Stomach (tissue), 19 donors: ENCODE measurements at regions of chr2 and their contacts with region 1.

Region 1: DNA sequence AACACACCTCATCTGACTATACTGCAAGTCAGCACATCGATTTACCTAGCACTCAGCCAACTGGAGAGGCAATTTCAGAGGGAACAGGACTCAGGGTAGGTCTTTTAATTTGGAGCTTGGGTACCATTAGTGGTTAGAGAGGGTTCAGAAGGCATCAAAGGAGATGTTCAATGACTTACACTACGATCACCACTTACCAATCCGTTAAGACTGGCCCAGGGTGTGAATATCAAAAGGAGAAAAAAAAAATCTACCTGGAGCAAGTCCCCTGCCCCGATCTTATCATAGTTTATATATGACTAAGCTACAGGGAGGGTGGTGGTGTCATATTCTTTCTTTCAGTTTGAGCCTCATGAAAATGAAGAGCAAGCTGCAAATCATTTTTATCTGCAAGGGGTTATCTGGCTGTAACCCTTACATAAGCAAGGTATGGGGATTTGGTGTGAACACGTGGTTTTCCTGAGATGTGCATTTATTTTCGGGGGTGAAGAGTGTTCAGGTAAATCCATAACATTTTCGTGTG is 36.4 kb upstream of the GPD2 start:
- DNase-seq: no peak
- H3K4me3 ChIP-seq: peak overlapping the region; percentile 66 to 79 (median 72)
- H3K27ac ChIP-seq: peak overlapping the region; percentile 88 to 97 (median 92)
- H3K4me1 ChIP-seq: peaks cover 14 to 27% (median 16%) of the 10 kb centered on the region in 4 donors
- H3K27me3 ChIP-seq: no peaks in the 10 kb centered on the region
- CTCF ChIP-seq: no peak
- EP300 ChIP-seq: no peak
- POLR2A ChIP-seq: no peak

Region 2: DNA sequence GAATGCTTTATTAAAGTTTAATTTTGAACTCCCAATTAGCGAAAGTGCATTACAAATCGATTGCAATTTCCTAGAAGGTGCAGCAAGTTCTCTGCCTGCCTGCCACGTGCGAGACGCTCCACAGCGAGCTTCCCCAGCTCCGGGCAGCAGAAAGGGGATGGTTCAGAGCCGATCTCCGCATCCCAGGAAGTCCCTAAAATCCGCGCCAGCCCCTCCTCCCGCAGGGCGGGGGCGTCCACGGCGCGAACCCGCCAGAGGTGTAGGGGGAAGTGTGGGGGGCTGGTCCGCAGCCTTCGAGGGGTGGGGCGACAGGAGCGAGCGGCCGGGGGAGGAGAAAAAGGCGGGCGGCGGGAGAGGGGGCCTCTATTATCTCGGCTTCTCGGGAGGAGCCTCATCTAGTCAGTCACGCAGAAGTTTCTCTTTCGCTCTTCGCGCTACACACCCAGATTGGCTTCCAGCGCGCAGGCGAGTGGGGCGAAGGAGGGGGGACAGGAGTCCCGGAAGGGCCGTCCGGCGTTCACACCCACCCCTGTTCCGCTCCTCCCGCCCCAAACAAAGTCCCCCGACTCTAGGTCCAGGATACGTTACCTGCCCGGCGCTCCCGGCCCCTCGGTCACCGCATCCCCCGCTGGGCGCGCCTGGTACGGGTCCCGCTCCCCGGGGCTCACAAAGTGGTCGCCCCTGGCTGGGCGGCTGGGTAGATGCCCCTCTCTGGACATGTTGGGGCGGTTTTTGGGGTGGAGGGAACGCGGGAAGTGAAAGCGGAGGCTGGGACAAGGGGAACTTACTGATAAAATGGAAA is 58.1 kb before region 1 on chr2:
- intact Hi-C with region 1: loop called (anchors 10 kb)
- DNase-seq: peak; percentile 90 to 97
- H3K4me3 ChIP-seq: peak overlapping the region; percentile 57 to 88 (median 64)
- H3K27ac ChIP-seq: peak overlapping the region; percentile 99 to 100 (median 100)
- H3K4me1 ChIP-seq: peaks cover 18 to 49% (median 33%) of the 10 kb centered on the region in 4 donors
- H3K27me3 ChIP-seq: no peaks in the 10 kb centered on the region
- CTCF ChIP-seq: no peak
- EP300 ChIP-seq: no peak
- POLR2A ChIP-seq: peak in 2 of 4 donors; percentile 47 to 60